HEK293T (cell line): ENCODE measurements at regions of chr17 and their contacts with region 1.

Region 1: DNA sequence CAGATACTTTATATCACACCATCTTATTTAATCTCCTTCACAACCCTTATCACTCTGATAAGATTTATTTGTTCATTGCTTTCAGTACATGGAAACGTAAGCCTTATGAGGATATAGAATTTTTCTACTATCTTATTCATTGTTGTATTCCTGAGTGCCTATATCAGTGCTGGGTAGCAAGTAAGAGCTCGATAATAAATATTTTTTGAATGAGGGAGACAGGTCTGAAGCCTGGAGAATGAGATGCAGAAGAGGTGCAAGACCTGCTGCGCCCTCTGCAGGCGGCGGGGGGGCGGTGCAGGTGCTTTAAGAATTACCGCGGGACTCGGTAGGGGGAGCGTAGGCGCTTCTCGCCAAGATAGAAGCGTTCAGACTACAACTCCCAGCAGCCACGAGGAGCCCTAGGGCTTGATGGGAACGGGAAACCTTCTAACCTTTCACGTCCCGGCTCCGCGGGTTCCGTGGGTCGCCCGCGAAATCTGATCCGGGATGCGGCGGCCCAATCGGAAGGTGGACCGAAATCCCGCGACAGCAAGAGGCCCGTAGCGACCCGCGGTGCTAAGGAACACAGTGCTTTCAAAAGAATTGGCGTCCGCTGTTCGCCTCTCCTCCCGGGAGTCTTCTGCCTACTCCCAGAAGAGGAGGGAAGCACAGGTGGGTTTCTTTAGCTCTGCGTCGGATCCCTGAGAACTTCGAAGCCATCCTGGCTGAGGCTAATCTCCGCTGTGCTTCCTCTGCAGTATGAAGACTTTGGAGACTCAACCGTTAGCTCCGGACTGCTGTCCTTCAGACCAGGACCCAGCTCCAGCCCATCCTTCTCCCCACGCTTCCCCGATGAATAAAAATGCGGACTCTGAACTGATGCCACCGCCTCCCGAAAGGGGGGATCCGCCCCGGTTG is at the start of gene WRAP53:
- DNase-seq: peak; percentile 92

Region 2: DNA sequence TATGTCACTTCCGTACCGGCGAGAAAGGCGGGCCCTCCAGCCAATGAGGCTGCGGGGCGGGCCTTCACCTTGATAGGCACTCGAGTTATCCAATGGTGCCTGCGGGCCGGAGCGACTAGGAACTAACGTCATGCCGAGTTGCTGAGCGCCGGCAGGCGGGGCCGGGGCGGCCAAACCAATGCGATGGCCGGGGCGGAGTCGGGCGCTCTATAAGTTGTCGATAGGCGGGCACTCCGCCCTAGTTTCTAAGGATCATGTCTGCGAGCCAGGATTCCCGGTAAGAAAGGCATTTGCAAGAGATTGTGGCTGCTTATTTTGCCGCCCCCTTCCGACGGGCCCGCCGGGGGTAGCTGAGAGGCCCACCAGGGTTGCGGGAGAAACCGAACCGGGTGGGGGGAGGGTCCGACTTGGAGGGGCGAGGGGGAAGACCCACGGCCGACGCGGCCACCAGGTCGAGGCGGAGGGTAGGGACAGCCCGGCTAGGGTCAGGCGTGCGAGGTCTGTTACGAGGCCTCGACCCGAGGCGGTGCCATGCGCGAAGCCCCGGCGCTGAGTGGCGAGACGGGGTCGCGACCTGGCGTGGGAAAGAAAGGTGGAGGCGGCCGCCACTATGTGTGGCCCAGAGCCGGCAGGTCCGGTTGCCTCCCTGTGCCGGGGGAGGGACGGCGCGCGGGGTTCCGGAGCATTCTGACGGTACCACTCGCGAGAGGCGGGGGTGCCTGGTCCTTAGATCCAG is 115.4 kb before region 1 on chr17:
- CTCF ChIA-PET with region 1: no interaction called
- POLR2A ChIA-PET with region 1: interaction called, 14 read pairs
- DNase-seq: peak; percentile 98

Region 3: GRCh38 chr17:7614422-7615264 is 73.5 kb before region 1 on chr17 and contains the start of gene FXR2:
- CTCF ChIA-PET with region 1: interaction called, 6 read pairs
- POLR2A ChIA-PET with region 1: interaction called, 40 read pairs
- DNase-seq: peak; percentile 99

Region 4: GRCh38 chr17:7640783-7641182 is 47.4 kb before region 1 on chr17:
- CTCF ChIA-PET with region 1: interaction called, 81 read pairs
- POLR2A ChIA-PET with region 1: interaction called, 236 read pairs
- DNase-seq: no peak

Region 5: DNA sequence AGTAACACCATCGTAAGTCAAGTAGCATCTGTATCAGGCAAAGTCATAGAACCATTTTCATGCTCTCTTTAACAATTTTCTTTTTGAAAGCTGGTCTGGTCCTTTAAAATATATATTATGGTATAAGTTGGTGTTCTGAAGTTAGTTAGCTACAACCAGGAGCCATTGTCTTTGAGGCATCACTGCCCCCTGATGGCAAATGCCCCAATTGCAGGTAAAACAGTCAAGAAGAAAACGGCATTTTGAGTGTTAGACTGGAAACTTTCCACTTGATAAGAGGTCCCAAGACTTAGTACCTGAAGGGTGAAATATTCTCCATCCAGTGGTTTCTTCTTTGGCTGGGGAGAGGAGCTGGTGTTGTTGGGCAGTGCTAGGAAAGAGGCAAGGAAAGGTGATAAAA is 14.9 kb before region 1 on chr17:
- CTCF ChIA-PET with region 1: interaction called, 3 read pairs
- POLR2A ChIA-PET with region 1: interaction called, 23 read pairs
- DNase-seq: peak; percentile 26

Region 6: GRCh38 chr17:7750321-7750821 is 62.2 kb after region 1 on chr17:
- CTCF ChIA-PET with region 1: no interaction called
- POLR2A ChIA-PET with region 1: no interaction called
- DNase-seq: no peak